CD4-positive, alpha-beta memory T cell (primary cell): ENCODE measurements at regions of chr2 and their contacts with region 1.

Region 1: DNA sequence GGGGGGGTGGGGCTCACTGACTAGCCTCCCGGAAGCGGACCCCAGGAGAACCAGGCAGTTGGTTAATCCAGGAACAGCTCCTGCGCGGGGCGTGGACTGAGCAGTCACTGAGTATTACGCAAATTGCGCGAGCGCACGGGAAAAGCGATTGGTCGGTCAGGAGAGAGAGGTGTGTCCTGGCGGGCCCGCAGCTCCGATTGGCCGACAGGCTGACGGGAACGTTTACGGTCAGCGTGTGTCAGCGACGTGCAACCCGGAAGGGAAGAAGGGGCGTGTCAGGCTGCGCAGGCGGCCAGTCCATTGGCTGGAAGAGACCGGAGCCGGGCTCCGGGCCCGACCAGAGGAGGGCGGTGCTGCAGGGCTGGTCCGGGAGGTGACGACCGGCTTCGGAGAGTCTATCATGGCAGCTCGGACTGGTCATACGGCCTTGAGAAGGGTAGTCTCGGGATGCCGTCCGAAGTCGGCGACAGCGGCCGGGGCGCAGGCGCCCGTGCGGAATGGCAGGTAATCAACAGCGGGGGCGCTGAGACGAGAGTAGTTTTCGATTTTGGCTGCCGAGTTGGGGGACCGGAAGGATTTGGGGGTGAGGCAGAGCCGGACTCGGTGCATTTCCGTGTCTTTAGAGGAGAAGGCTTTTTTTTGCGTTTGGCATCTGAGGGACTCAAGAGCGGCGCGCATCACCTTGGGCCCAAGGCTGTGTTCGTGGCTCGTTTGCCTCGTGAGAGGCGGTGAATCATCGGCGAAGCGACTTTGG is at the start of gene COQ10B:
- DNase-seq: peak; percentile 97 to 99 (median 99)
- H3K4me3 ChIP-seq: peak within 1 kb of the TSS; percentile 87 to 88
- H3K4me3 Mint-ChIP-seq: peak within 1 kb of the TSS; percentile 96 to 100 (median 99)
- H3K27ac ChIP-seq: peak within 1 kb of the TSS; percentile 99
- H3K27ac Mint-ChIP-seq: peak within 1 kb of the TSS; percentile 99 to 100 (median 100)
- H3K4me1 ChIP-seq: peaks cover 36% of the 10 kb centered on the region
- H3K4me1 Mint-ChIP-seq: peaks cover 28 to 65% (median 41%) of the 10 kb centered on the region in 4 donors
- H3K27me3 ChIP-seq: no peaks in the 10 kb centered on the region
- H3K27me3 Mint-ChIP-seq: peaks cover 2 to 3% of the 10 kb centered on the region in 2 donors
- total RNA-seq, gene COQ10B: 31.7 to 33.1 TPM

Region 2: DNA sequence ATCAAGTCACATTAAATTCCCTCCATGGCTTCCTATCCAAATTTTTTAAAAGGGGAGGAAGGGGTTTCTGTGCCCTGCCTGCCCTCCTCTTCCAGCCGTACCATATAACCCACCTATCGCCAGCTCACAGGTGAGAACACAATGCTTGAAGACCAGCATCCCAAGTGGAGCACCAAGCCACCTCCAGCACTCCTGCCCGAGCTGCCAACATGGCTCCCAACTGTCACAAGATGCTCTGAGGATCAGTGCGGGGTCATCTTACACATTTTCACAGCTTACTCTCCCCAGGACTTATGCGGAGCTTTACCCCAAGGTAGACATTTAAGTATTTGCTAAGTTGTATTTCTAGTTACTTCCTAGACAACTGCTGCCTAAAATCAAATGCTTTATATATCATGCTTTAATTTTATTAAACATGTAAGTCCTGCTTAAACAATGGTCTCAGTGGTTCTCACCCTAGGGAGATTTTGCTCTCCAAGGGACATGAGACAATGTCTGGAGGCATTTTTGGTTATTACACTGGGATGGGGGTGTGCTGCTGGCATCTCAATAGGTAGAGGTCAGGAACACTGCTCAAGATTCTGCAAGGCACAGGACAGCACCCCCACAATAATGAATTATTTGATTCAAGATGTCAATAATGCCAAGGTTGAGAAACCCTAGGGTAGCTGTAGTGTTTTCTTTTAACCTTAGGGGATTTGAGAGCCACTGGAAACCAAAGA is 64.3 kb before region 1 on chr2:
- CTCF ChIA-PET with region 1: no interaction called
- POLR2A ChIA-PET with region 1: no interaction called
- intact Hi-C with region 1: loop called (anchors 2 kb)
- DNase-seq: no peak
- H3K4me3 ChIP-seq: no peak overlapping the region
- H3K4me3 Mint-ChIP-seq: no peak overlapping the region
- H3K27ac ChIP-seq: no peak overlapping the region
- H3K27ac Mint-ChIP-seq: peak overlapping the region in 3 of 7 donors; percentile 2 to 83 (median 57)
- H3K4me1 ChIP-seq: peaks cover under 1% of the 10 kb centered on the region
- H3K4me1 Mint-ChIP-seq: peaks cover 9 to 11% (median 11%) of the 10 kb centered on the region in 4 donors
- H3K27me3 ChIP-seq: no peaks in the 10 kb centered on the region
- H3K27me3 Mint-ChIP-seq: no peaks in the 10 kb centered on the region

Region 3: DNA sequence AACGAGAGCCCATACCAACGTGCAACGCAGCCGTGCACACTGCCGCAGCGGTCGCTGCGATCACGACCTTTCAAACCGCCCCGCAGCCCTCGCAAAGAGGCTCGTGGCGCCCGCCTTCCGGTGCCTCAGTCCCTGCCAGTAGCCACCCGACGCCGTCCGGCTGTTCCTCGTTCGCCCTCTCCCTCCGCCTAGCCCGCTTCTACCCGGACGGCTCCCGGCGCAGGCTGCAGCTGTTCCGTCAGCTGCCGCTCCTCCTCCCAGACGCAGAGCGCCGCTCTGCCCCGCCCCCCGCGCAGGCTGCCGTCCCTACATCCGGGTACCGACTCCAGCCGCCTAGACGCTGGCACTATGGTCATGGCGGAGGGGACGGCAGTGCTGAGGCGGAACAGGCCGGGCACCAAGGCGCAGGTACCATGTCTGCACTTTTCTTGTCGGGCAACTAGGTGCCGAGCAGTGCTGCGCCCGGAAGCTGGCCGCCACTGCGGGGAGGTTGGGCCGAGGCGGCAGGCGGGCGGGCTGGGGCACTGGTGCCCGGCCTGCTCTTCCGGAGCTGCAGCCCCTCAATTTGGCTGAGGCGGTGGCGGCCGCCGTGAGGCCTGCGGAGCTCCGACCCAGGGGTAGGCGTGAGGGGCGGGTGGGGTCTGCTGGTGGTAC is 62.5 kb after region 1 on chr2 and contains the start of gene MOB4:
- CTCF ChIA-PET with region 1: interaction called, 3 read pairs
- POLR2A ChIA-PET with region 1: interaction called, 38 read pairs
- intact Hi-C with region 1: loop called (anchors 1 kb)
- DNase-seq: peak; percentile 92 to 94 (median 93)
- H3K4me3 ChIP-seq: peak within 1 kb of the TSS; percentile 88 to 93
- H3K4me3 Mint-ChIP-seq: peak within 1 kb of the TSS; percentile 86 to 99 (median 94)
- H3K27ac ChIP-seq: peak within 1 kb of the TSS; percentile 95
- H3K27ac Mint-ChIP-seq: peak within 1 kb of the TSS; percentile 92 to 98 (median 97)
- H3K4me1 ChIP-seq: peaks cover 33% of the 10 kb centered on the region
- H3K4me1 Mint-ChIP-seq: peaks cover 18 to 59% (median 33%) of the 10 kb centered on the region in 4 donors
- H3K27me3 ChIP-seq: no peaks in the 10 kb centered on the region
- H3K27me3 Mint-ChIP-seq: no peaks in the 10 kb centered on the region
- total RNA-seq, gene MOB4: 20.2 to 21.8 TPM